ENCODE measurements at regions of chr17 and their contacts with region 1.

Region 1: GRCh38 chr17:74457146-74457819 is 9.2 kb upstream of the CD300A start:
- DNase-seq: no peak
- ATAC-seq: peak; percentile 61
- H3K4me3 ChIP-seq: no peak overlapping the region
- H3K27ac ChIP-seq: no peak overlapping the region
- H3K4me1 ChIP-seq: peaks cover 16% of the 10 kb centered on the region
- H3K27me3 ChIP-seq: peaks cover 0 to 2% of the 10 kb centered on the region in 2 experiments; a peak in 2 of 4 replicates
- CTCF ChIP-seq: peak; percentile 87 to 96 (median 94)
- EP300 ChIP-seq: no peak
- POLR2A ChIP-seq: no peak
- RAD21 ChIP-seq: peak; percentile 98

Region 2: GRCh38 chr17:74219576-74220133 is 237.6 kb before region 1 on chr17:
- CTCF ChIA-PET with region 1: no interaction called
- POLR2A ChIA-PET with region 1: no interaction called
- RAD21 ChIA-PET with region 1: no interaction called
- SMC1A ChIA-PET with region 1: no interaction called
- in situ Hi-C with region 1: no loop called
- intact Hi-C with region 1: no loop called
- DNase-seq: no peak
- ATAC-seq: no peak
- H3K4me3 ChIP-seq: no peak overlapping the region
- H3K27ac ChIP-seq: no peak overlapping the region
- H3K4me1 ChIP-seq: peaks cover 9% of the 10 kb centered on the region
- H3K27me3 ChIP-seq: no peaks in the 10 kb centered on the region
- CTCF ChIP-seq: no peak
- EP300 ChIP-seq: no peak
- POLR2A ChIP-seq: no peak
- RAD21 ChIP-seq: no peak

Region 3: DNA sequence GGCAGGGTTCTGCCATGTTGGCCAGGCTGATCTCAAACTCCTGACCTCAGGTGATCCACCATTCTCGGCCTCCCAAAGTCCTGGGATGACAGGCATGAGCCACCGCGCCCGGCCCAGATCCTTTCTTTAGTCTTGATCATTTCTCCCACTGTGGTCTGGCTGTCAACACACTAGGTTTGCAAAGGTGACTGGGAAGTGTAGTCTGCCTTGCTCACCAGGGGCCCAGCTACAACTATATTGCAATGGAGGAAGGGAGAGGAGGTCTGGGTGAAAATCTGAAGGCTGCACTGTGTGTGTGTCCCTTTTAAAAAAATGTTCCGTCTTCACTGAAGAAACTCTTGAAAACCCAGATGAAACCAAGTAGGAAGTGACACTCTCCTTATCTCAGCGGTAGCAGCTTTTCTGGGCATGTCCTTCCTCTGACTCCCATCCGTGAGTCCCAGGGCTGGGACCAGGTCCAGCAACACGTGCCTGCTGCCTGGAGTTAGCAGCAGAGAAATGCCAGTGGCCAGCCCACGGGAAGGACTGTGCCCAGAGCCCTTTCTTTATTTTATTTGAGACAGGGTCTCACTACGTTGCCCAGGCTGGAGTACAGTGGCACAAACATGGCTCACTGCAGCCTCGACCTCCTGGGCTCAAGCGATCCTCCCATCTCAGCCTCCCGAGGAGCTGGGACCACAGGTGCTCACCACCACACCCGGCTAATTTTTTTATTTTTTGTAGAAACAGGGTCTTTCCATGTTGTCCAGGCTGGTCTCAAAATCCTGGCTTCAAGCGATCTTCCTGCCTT is 149.1 kb before region 1 on chr17:
- CTCF ChIA-PET with region 1: no interaction called
- POLR2A ChIA-PET with region 1: no interaction called
- RAD21 ChIA-PET with region 1: no interaction called
- SMC1A ChIA-PET with region 1: no interaction called
- in situ Hi-C with region 1: no loop called
- intact Hi-C with region 1: no loop called
- DNase-seq: no peak
- ATAC-seq: no peak
- H3K4me3 ChIP-seq: no peak overlapping the region
- H3K27ac ChIP-seq: no peak overlapping the region
- H3K4me1 ChIP-seq: no peaks in the 10 kb centered on the region
- H3K27me3 ChIP-seq: no peaks in the 10 kb centered on the region
- CTCF ChIP-seq: no peak
- EP300 ChIP-seq: no peak
- POLR2A ChIP-seq: no peak
- RAD21 ChIP-seq: no peak

Region 4: GRCh38 chr17:74361230-74362068 is 95.8 kb before region 1 on chr17 and contains the start of gene BTBD17:
- CTCF ChIA-PET with region 1: interaction called, 114 read pairs
- POLR2A ChIA-PET with region 1: no interaction called
- RAD21 ChIA-PET with region 1: interaction called, 83 read pairs
- SMC1A ChIA-PET with region 1: interaction called, 47 read pairs
- in situ Hi-C with region 1: no loop called
- intact Hi-C with region 1: no loop called
- DNase-seq: no peak
- ATAC-seq: peak; percentile 92
- H3K4me3 ChIP-seq: no peak within 1 kb of the TSS
- H3K27ac ChIP-seq: no peak within 1 kb of the TSS
- H3K4me1 ChIP-seq: no peaks in the 10 kb centered on the region
- H3K27me3 ChIP-seq: peaks cover 2 to 3% of the 10 kb centered on the region in 2 experiments; a peak in 3 of 4 replicates
- CTCF ChIP-seq: peak; percentile 45 to 62 (median 54)
- EP300 ChIP-seq: no peak
- POLR2A ChIP-seq: no peak
- RAD21 ChIP-seq: peak; percentile 45; the same call in 1 of the 2 replicates
- polyA plus RNA-seq, gene BTBD17: not detected

Region 5: DNA sequence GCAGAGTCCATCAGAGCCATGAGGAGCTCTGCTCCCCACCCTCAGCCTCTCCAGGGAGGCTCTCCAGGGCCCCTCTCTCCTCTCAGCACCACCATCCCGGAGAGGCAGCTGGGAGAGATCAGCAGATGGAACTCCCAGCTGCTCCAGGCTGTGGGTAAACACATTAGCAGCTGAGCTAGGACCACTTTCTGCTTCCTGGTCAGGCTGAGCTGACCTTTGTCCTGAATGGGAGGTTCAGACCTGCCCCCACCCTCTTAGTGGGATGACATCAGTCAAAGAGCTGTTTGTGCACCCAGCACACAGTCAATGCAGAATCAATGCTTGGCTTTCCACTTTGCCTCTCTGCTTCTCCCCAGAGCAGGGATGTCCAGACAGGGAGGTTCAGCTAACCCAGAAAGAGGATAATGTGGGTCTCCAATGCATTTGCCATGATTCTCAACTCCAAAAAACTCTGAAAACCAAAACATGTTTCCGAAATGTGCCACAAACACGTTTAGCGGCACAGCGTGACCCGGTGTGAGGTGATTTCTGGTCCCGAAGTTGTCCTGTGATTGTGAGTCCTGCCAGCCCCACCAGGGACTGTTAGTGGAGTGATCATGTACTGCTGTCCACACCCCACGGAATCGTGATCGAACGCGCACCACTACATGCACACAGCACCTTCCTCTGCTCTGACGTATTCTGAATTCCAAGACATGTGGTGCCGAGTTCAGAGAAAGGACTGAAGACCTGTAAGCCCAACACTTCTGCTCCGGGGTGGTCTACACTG is 83.3 kb before region 1 on chr17:
- CTCF ChIA-PET with region 1: interaction called, 314 read pairs
- POLR2A ChIA-PET with region 1: interaction called, 10 read pairs
- RAD21 ChIA-PET with region 1: interaction called, 83 read pairs
- SMC1A ChIA-PET with region 1: interaction called, 47 read pairs
- in situ Hi-C with region 1: no loop called
- intact Hi-C with region 1: loop called (anchors 1 kb)
- DNase-seq: no peak
- ATAC-seq: no peak
- H3K4me3 ChIP-seq: no peak overlapping the region
- H3K27ac ChIP-seq: no peak overlapping the region
- H3K4me1 ChIP-seq: peaks cover under 1% of the 10 kb centered on the region
- H3K27me3 ChIP-seq: no peaks in the 10 kb centered on the region
- CTCF ChIP-seq: no peak
- EP300 ChIP-seq: no peak
- POLR2A ChIP-seq: no peak
- RAD21 ChIP-seq: no peak

Region 6: GRCh38 chr17:74408262-74408661 is 49.0 kb before region 1 on chr17:
- CTCF ChIA-PET with region 1: interaction called, 11 read pairs
- POLR2A ChIA-PET with region 1: no interaction called
- RAD21 ChIA-PET with region 1: interaction called, 3 read pairs
- SMC1A ChIA-PET with region 1: interaction called, 17 read pairs
- in situ Hi-C with region 1: no loop called
- intact Hi-C with region 1: no loop called
- DNase-seq: no peak
- ATAC-seq: peak; percentile 76
- H3K4me3 ChIP-seq: no peak overlapping the region
- H3K27ac ChIP-seq: no peak overlapping the region
- H3K4me1 ChIP-seq: no peaks in the 10 kb centered on the region
- H3K27me3 ChIP-seq: no peaks in the 10 kb centered on the region
- CTCF ChIP-seq: peak; percentile 6 to 33 (median 18); a peak in 2 of 6 replicates
- EP300 ChIP-seq: no peak
- POLR2A ChIP-seq: no peak
- RAD21 ChIP-seq: no peak

Region 7: GRCh38 chr17:74437702-74438101 is 19.6 kb before region 1 on chr17:
- CTCF ChIA-PET with region 1: interaction called, 73 read pairs
- POLR2A ChIA-PET with region 1: no interaction called
- RAD21 ChIA-PET with region 1: interaction called, 7 read pairs
- SMC1A ChIA-PET with region 1: interaction called, 12 read pairs
- in situ Hi-C with region 1: no loop called
- intact Hi-C with region 1: no loop called
- DNase-seq: no peak
- ATAC-seq: no peak
- H3K4me3 ChIP-seq: no peak overlapping the region
- H3K27ac ChIP-seq: no peak overlapping the region
- H3K4me1 ChIP-seq: no peaks in the 10 kb centered on the region
- H3K27me3 ChIP-seq: no peaks in the 10 kb centered on the region
- CTCF ChIP-seq: peak; percentile 49 to 83 (median 71)
- EP300 ChIP-seq: no peak
- POLR2A ChIP-seq: no peak
- RAD21 ChIP-seq: peak; percentile 58

Region 8: GRCh38 chr17:74467221-74467951 is 10.1 kb after region 1 on chr17:
- CTCF ChIA-PET with region 1: interaction called, 50 read pairs
- POLR2A ChIA-PET with region 1: interaction called, 3 read pairs
- RAD21 ChIA-PET with region 1: interaction called, 9 read pairs
- SMC1A ChIA-PET with region 1: interaction called, 10 read pairs
- in situ Hi-C with region 1: no loop called
- intact Hi-C with region 1: no loop called
- DNase-seq: peak; percentile 95
- ATAC-seq: peak; percentile 78
- H3K4me3 ChIP-seq: peak overlapping the region; percentile 86
- H3K27ac ChIP-seq: peak overlapping the region; percentile 92
- H3K4me1 ChIP-seq: peaks cover 35% of the 10 kb centered on the region
- H3K27me3 ChIP-seq: no peaks in the 10 kb centered on the region
- CTCF ChIP-seq: no peak
- EP300 ChIP-seq: peak; percentile 68 to 79
- POLR2A ChIP-seq: peak; percentile 58; the same call in 1 of the 2 replicates
- RAD21 ChIP-seq: 0 out of 2 replicates have a peak, but pooled peaks have one; percentile 3

Region 9: GRCh38 chr17:74528491-74529199 is 71.4 kb after region 1 on chr17:
- CTCF ChIA-PET with region 1: interaction called, 24 read pairs
- POLR2A ChIA-PET with region 1: no interaction called
- RAD21 ChIA-PET with region 1: interaction called, 16 read pairs
- SMC1A ChIA-PET with region 1: interaction called, 15 read pairs
- in situ Hi-C with region 1: no loop called
- intact Hi-C with region 1: loop called (anchors 2 kb)
- DNase-seq: peak; percentile 76
- ATAC-seq: peak; percentile 91
- H3K4me3 ChIP-seq: no peak overlapping the region
- H3K27ac ChIP-seq: no peak overlapping the region
- H3K4me1 ChIP-seq: peaks cover 7% of the 10 kb centered on the region
- H3K27me3 ChIP-seq: peaks cover 0 to 1% of the 10 kb centered on the region in 2 experiments; a peak in 1 of 4 replicates
- CTCF ChIP-seq: no peak
- EP300 ChIP-seq: peak; percentile 37 to 71; a peak in 2 of 4 replicates
- POLR2A ChIP-seq: no peak
- RAD21 ChIP-seq: no peak

Region 10: GRCh38 chr17:74573169-74573568 is 115.9 kb after region 1 on chr17:
- CTCF ChIA-PET with region 1: no interaction called
- POLR2A ChIA-PET with region 1: no interaction called
- RAD21 ChIA-PET with region 1: no interaction called
- SMC1A ChIA-PET with region 1: no interaction called
- in situ Hi-C with region 1: no loop called
- intact Hi-C with region 1: no loop called
- DNase-seq: no peak
- ATAC-seq: no peak
- H3K4me3 ChIP-seq: no peak overlapping the region
- H3K27ac ChIP-seq: no peak overlapping the region
- H3K4me1 ChIP-seq: no peaks in the 10 kb centered on the region
- H3K27me3 ChIP-seq: peaks cover 0 to 3% of the 10 kb centered on the region in 2 experiments; a peak in 1 of 4 replicates
- CTCF ChIP-seq: no peak
- EP300 ChIP-seq: no peak
- POLR2A ChIP-seq: no peak
- RAD21 ChIP-seq: no peak

Measured in GM12878 (cell line).